ENCODE measurements at regions of chr6 and their contacts with region 1.

Region 1: DNA sequence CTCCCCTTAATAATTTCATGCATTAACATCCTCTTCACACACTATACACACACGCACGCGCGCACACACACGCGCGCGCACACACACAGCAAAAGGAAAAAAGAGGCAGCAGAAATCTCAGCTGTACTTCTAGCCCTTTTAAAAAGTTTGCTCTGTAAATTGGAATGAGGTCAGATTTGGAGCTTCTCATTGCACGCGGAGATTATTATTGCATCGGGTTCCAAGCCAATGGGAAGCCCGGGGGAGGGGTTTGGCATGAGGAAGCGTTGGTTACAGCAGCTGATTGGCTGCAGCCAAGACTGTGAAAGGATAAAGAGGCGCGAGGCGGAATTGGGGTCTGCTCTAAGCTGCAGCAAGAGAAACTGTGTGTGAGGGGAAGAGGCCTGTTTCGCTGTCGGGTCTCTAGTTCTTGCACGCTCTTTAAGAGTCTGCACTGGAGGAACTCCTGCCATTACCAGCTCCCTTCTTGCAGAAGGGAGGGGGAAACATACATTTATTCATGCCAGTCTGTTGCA is at the start of gene SOX4:
- DNase-seq: peak; percentile 43 to 74 (median 59)
- H3K4me3 ChIP-seq: peak within 1 kb of the TSS; percentile 51 to 57
- H3K4me3 Mint-ChIP-seq: peak within 1 kb of the TSS; percentile 86 to 93 (median 89)
- H3K27ac ChIP-seq: no peak within 1 kb of the TSS
- H3K27ac Mint-ChIP-seq: peak within 1 kb of the TSS in 5 of 7 donors; percentile 12 to 78 (median 57)
- H3K4me1 ChIP-seq: peaks cover 36% of the 10 kb centered on the region
- H3K4me1 Mint-ChIP-seq: peaks cover 15 to 29% (median 19%) of the 10 kb centered on the region in 4 donors
- H3K27me3 ChIP-seq: peaks cover 38% of the 10 kb centered on the region
- H3K27me3 Mint-ChIP-seq: peaks cover 27 to 35% of the 10 kb centered on the region in 2 donors
- total RNA-seq, gene SOX4: 0.12 to 0.14 TPM

Region 2: DNA sequence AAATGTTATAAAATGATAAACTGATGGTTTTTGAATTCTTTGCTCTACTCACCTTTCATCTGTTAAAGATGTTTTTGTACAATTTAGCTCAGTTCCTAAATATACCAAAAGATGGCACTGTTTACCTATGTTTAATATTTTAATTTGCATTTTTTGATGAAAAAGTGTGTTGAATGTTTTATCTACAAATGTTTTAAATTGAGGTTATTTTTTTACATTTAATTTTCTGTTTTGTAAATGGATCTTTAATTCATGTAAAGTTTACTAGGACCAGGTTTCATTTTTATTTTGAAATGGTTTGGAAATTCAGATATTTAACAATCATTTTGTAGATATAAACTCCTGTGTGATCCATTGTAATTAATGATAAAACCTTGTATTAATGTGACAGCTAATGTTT is 1029.2 kb before region 1 on chr6:
- CTCF ChIA-PET with region 1: interaction called, 124 read pairs
- POLR2A ChIA-PET with region 1: interaction called, 3 read pairs
- intact Hi-C with region 1: loop called (anchors 1 kb)
- DNase-seq: peak in 4 of 5 donors; percentile 25 to 34 (median 26)
- H3K4me3 ChIP-seq: no peak overlapping the region
- H3K4me3 Mint-ChIP-seq: no peak overlapping the region
- H3K27ac ChIP-seq: no peak overlapping the region
- H3K27ac Mint-ChIP-seq: no peak overlapping the region
- H3K4me1 ChIP-seq: peaks cover 5% of the 10 kb centered on the region
- H3K4me1 Mint-ChIP-seq: peaks cover 6 to 8% (median 7%) of the 10 kb centered on the region in 4 donors
- H3K27me3 ChIP-seq: no peaks in the 10 kb centered on the region
- H3K27me3 Mint-ChIP-seq: no peaks in the 10 kb centered on the region

Region 3: DNA sequence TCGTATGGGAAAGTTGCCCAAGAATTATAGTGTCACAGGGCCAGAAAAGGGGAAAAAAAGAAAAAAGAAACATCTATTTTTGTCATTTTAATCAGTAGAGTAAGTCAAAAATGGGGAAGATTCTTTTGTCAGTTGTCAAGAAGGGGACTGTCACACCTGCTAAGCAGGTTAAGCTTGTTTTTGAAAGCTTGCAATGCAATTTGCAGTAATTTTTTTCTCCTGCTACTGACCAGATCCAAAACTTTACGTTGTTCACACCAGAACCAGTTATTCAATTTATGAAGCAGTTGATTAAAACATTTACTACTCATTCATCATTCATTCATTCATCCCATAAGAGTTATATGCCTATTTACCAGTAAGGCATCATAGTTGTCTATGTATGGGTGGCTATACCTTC is 171.6 kb after region 1 on chr6:
- CTCF ChIA-PET with region 1: no interaction called
- POLR2A ChIA-PET with region 1: no interaction called
- intact Hi-C with region 1: no loop called
- DNase-seq: no peak
- H3K4me3 ChIP-seq: no peak overlapping the region
- H3K4me3 Mint-ChIP-seq: no peak overlapping the region
- H3K27ac ChIP-seq: no peak overlapping the region
- H3K27ac Mint-ChIP-seq: no peak overlapping the region
- H3K4me1 ChIP-seq: no peaks in the 10 kb centered on the region
- H3K4me1 Mint-ChIP-seq: no peaks in the 10 kb centered on the region
- H3K27me3 ChIP-seq: no peaks in the 10 kb centered on the region
- H3K27me3 Mint-ChIP-seq: no peaks in the 10 kb centered on the region